ENCODE measurements at regions of chr16 and their contacts with region 1.

Region 1: GRCh38 chr16:22297114-22297878 is at the start of gene POLR3E:
- DNase-seq: peak; percentile 97
- H3K4me3 ChIP-seq: peak within 1 kb of the TSS; percentile 88
- H3K27ac ChIP-seq: peak within 1 kb of the TSS; percentile 93
- H3K4me1 ChIP-seq: no peaks in the 10 kb centered on the region
- H3K27me3 ChIP-seq: no peaks in the 10 kb centered on the region
- total RNA-seq, gene POLR3E: 20.8 and 27.1 TPM in 2 replicates

Region 2: GRCh38 chr16:22195695-22196558 is 101.4 kb before region 1 on chr16:
- in situ Hi-C with region 1: loop called (anchors 5 kb)
- DNase-seq: peak; percentile 91
- H3K4me3 ChIP-seq: peak overlapping the region; percentile 81
- H3K27ac ChIP-seq: peak overlapping the region; percentile 55
- H3K4me1 ChIP-seq: peaks cover 34% of the 10 kb centered on the region
- H3K27me3 ChIP-seq: no peaks in the 10 kb centered on the region

Region 3: GRCh38 chr16:22386976-22387375 is 89.7 kb after region 1 on chr16:
- in situ Hi-C with region 1: no loop called
- DNase-seq: peak; percentile 88
- H3K4me3 ChIP-seq: no peak overlapping the region
- H3K27ac ChIP-seq: peak overlapping the region; percentile 43; the same call in 1 of the 2 replicates
- H3K4me1 ChIP-seq: peaks cover 16% of the 10 kb centered on the region; the same call in 1 of the 2 replicates
- H3K27me3 ChIP-seq: no peaks in the 10 kb centered on the region

Region 4: GRCh38 chr16:23029733-23030420 is 732.6 kb after region 1 on chr16:
- in situ Hi-C with region 1: no loop called
- DNase-seq: no peak
- H3K4me3 ChIP-seq: no peak overlapping the region
- H3K27ac ChIP-seq: no peak overlapping the region
- H3K4me1 ChIP-seq: 0 out of 2 replicates have a peak, but pooled peaks cover 4% of the 10 kb centered on the region
- H3K27me3 ChIP-seq: no peaks in the 10 kb centered on the region